CD4-positive, alpha-beta T cell (primary cell): ENCODE measurements at regions of chr21 and their contacts with region 1.

Region 1: GRCh38 chr21:37267269-37268184 is at the start of gene VPS26C:
- DNase-seq: peak; percentile 94 to 100 (median 96)
- ATAC-seq: peak; percentile 84
- H3K4me3 ChIP-seq: peak within 1 kb of the TSS; percentile 90
- H3K4me3 Mint-ChIP-seq: peak within 1 kb of the TSS; percentile 93
- H3K27ac ChIP-seq: peak within 1 kb of the TSS; percentile 96 to 98
- H3K27ac Mint-ChIP-seq: peak within 1 kb of the TSS; percentile 97
- H3K4me1 ChIP-seq: peaks cover 19% of the 10 kb centered on the region
- H3K4me1 Mint-ChIP-seq: peaks cover 56% of the 10 kb centered on the region
- H3K27me3 ChIP-seq: no peaks in the 10 kb centered on the region
- H3K27me3 Mint-ChIP-seq: no peaks in the 10 kb centered on the region
- CTCF ChIP-seq: no peak
- total RNA-seq, gene VPS26C: 31.8 to 36.0 TPM

Region 2: DNA sequence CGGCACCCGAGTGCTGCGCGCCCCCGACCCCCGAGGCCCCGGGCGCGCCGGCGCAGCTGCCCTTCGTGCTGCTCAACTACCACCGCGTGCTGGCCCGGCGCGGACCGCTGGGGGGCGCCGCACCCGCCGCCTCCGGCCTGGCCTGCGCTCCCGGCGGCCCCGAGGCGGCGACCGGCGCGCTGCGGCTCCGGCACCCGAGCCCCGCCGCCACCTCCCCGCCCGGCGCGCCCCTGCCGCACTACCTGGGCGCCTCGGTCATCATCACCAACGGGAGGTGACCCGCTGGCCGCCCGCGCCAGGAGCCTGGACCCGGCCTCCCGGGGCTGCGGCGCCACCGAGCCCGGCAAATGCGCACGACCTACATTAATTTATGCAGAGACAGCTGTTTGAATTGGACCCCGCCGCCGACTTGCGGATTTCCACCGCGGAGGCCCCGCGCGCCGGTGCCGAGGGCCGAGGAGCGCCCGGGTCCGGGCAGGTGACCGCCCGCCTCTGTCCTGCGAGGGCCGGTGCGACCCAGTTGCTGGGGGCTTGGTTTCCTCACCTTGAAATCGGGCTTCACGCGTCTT is 519.6 kb before region 1 on chr21:
- CTCF ChIA-PET with region 1: no interaction called
- POLR2A ChIA-PET with region 1: no interaction called
- intact Hi-C with region 1: no loop called
- DNase-seq: peak in 1 of 14 experiments; percentile 19
- ATAC-seq: peak; percentile 41
- H3K4me3 ChIP-seq: no peak overlapping the region
- H3K4me3 Mint-ChIP-seq: no peak overlapping the region
- H3K27ac ChIP-seq: no peak overlapping the region
- H3K27ac Mint-ChIP-seq: no peak overlapping the region
- H3K4me1 ChIP-seq: peaks cover 5% of the 10 kb centered on the region
- H3K4me1 Mint-ChIP-seq: peaks cover 16% of the 10 kb centered on the region
- H3K27me3 ChIP-seq: peaks cover 25 to 36% of the 10 kb centered on the region in 2 experiments
- H3K27me3 Mint-ChIP-seq: peaks cover 73% of the 10 kb centered on the region
- CTCF ChIP-seq: no peak

Region 3: DNA sequence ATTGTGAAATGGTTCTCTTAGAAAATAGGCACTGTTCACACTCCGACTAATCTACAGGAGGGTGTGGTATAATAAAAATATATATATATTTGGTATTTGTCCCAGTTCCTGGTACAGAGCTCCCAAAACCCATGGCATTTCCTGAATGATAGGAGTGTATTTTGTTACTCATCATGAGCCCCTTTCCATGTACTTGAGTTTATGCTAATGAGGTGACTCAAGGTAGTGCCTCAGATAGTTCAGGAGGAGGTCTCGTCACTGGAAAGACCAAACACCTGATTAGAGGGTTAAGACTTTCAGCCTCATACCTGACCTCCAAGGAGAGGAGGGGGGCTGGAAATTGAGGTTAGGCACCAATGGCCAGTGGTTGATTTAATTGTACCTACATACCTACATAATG is 136.6 kb before region 1 on chr21:
- CTCF ChIA-PET with region 1: no interaction called
- POLR2A ChIA-PET with region 1: no interaction called
- intact Hi-C with region 1: no loop called
- DNase-seq: no peak
- ATAC-seq: no peak
- H3K4me3 ChIP-seq: no peak overlapping the region
- H3K4me3 Mint-ChIP-seq: no peak overlapping the region
- H3K27ac ChIP-seq: no peak overlapping the region
- H3K27ac Mint-ChIP-seq: no peak overlapping the region
- H3K4me1 ChIP-seq: no peaks in the 10 kb centered on the region
- H3K4me1 Mint-ChIP-seq: peaks cover 13% of the 10 kb centered on the region
- H3K27me3 ChIP-seq: no peaks in the 10 kb centered on the region
- H3K27me3 Mint-ChIP-seq: no peaks in the 10 kb centered on the region
- CTCF ChIP-seq: no peak

Region 4: GRCh38 chr21:37226041-37226920 is 41.2 kb before region 1 on chr21:
- CTCF ChIA-PET with region 1: no interaction called
- POLR2A ChIA-PET with region 1: interaction called, 23 read pairs
- intact Hi-C with region 1: loop called (anchors 1 kb)
- DNase-seq: no peak
- ATAC-seq: no peak
- H3K4me3 ChIP-seq: no peak overlapping the region
- H3K4me3 Mint-ChIP-seq: peak overlapping the region; percentile 78
- H3K27ac ChIP-seq: peak overlapping the region; percentile 19 to 57
- H3K27ac Mint-ChIP-seq: peak overlapping the region; percentile 91
- H3K4me1 ChIP-seq: peaks cover 35% of the 10 kb centered on the region
- H3K4me1 Mint-ChIP-seq: peaks cover 41% of the 10 kb centered on the region
- H3K27me3 ChIP-seq: no peaks in the 10 kb centered on the region
- H3K27me3 Mint-ChIP-seq: no peaks in the 10 kb centered on the region
- CTCF ChIP-seq: no peak